Keratinocyte (primary cell): ENCODE measurements at regions of chr4 and their contacts with region 1.

Region 1: DNA sequence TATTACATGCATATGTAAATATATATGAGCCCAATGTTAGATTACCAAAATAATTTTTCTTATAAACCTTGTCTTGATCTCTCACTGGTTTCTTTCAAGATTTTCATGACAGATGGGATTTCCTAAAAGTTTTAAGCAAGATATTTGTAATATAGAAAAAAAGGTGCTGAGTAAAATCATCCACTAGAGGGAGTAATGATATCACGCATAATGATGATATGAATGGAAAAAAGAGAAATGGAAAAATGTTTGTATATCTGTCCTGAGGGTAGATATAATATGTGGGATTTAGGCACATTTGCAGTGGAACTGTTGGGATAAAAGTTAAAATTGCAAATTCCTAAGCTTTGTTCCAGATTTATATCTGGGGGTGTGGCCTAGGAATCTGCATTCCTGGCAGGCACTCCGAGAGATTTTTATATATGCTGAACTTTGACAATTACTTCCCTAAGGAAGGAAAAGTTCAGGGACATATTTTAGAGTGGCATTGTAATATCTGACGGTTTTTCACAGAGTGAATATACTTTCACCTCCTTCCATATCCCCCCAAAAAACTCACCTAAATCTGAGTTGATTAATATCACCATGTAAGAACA is 60.5 kb downstream of the TMA16 start:
- DNase-seq: no peak
- H3K4me3 ChIP-seq: no peak overlapping the region
- H3K27ac ChIP-seq: no peak overlapping the region
- H3K4me1 ChIP-seq: peaks cover 12% of the 10 kb centered on the region
- H3K27me3 ChIP-seq: no peaks in the 10 kb centered on the region
- CTCF ChIP-seq: peak in 2 of 3 experiments; percentile 33 to 56

Region 2: GRCh38 chr4:163085085-163085484 is 469.9 kb before region 1 on chr4:
- dilution Hi-C with region 1: no loop called
- DNase-seq: no peak
- H3K4me3 ChIP-seq: no peak overlapping the region
- H3K27ac ChIP-seq: no peak overlapping the region
- H3K4me1 ChIP-seq: no peaks in the 10 kb centered on the region
- H3K27me3 ChIP-seq: no peaks in the 10 kb centered on the region
- CTCF ChIP-seq: no peak

Region 3: GRCh38 chr4:163473576-163473975 is 81.4 kb before region 1 on chr4 and contains the start of gene TKTL2:
- dilution Hi-C with region 1: no loop called
- DNase-seq: no peak
- H3K4me3 ChIP-seq: no peak within 1 kb of the TSS
- H3K27ac ChIP-seq: no peak within 1 kb of the TSS
- H3K4me1 ChIP-seq: no peaks in the 10 kb centered on the region
- H3K27me3 ChIP-seq: no peaks in the 10 kb centered on the region
- CTCF ChIP-seq: no peak
- polyA plus RNA-seq, gene TKTL2: not detected in 3 replicates

Region 4: DNA sequence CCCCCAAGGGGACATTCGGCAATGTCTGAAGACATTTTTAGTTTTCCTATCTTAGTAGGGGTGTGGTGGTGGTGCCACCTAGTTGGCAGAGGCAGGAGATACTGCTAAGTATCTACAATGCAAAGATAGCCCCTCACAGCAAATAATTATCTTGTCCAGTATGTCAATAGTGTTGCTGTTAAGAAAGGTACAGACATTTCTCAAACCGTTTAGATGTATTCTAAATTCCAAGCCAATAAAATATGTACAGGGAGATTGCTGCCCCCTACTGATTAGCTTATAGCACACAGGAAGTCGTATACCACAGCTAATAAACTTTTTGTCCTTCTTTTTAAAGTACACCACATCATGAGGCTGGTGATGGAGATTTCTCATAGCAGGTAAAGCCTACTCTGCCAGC is 200.0 kb after region 1 on chr4:
- dilution Hi-C with region 1: loop called (anchors 25 kb)
- DNase-seq: no peak
- H3K4me3 ChIP-seq: no peak overlapping the region
- H3K27ac ChIP-seq: no peak overlapping the region
- H3K4me1 ChIP-seq: no peaks in the 10 kb centered on the region
- H3K27me3 ChIP-seq: no peaks in the 10 kb centered on the region
- CTCF ChIP-seq: peak; percentile 22 to 40 (median 35)